ENCODE measurements at regions of chr11 and their contacts with region 1.

Region 1: DNA sequence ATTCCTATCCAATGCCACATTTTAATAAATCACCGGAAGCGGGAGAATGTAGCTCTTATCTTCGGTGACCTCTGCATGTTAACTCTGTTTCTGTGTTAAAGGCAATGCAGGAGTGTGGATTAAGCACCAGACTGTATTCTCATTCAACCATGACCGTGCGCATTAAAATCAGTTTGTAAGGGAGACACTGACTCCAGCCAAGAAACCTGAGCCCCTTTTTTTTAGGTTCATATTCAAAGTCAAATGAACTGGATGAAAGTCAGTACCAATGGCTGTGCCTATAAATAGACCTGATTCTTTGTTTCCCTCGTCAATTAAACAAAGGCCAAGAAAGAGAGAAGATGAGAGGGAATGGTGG is 32.2 kb downstream of the C11orf91 start:
- DNase-seq: no peak
- ATAC-seq: no peak

Region 2: GRCh38 chr11:33389635-33390034 is 278.8 kb before region 1 on chr11:
- intact Hi-C with region 1: loop called (anchors 10 kb)
- DNase-seq: no peak
- ATAC-seq: no peak

Region 3: DNA sequence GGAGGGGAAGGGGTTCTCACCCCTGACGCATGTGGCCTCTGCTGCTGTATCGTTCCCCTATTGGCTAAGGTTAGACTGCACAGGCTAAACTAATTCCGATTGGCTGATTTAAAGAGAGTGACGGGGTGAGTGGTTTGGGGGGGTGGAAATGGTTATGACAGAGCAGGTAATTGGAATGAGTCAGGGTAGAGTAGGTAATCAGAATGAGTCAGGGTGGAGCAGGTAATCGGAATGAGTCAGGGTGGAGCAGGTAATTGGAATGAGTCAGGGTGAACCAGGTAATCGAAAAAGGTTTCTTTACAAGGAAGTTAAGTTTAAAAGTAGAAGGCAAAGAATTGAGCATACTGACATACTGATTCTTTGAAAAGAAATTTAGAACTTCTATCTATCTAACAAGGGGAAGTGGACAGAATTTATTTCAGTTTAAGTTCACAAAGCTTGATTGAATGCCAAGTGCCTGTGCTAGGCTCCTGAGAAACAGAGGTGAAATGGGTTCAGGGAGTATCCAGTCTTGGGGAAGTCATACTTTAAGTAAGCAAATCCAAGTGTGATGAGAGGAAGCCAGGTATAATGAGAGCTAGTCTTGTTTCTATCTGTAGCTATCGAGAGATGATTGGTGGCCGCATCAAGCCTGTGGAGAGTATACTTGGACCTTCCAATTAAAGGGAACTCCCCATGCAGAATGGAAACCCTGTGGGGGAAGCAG is 25.8 kb before region 1 on chr11:
- intact Hi-C with region 1: no loop called
- DNase-seq: no peak
- ATAC-seq: no peak

Measured in left ventricle myocardium superior (tissue), 1 donor.